ENCODE measurements at regions of chr2 and their contacts with region 1.

Region 1: DNA sequence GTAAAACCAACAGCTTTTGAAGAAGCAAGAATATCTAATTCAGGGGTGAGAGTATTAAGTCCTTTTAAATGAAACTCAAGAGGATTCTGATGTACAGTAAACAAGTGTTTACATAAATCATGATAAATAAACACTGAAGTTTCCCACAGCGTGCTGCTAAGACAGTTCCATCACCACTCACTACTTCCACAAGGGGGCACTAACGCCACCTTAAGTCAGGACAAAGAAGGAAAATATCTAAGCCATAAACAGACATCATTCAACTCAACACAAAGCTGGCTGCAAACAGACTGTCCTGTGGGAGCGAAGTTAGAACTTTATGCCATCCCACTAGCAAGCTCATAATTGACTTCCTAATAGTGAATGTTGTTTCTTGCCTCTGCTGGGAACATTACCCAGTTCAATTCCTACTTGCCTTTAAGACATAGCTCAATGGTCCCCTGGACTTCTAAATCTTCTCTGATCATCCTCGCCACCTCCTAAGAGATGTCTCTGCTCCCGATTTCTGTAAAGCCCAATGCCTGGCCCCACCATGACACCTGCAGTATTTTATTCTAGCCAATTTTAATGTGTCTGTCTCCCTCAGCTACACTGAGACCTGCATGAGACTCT is 36.5 kb downstream of the MRPL44 start:
- DNase-seq: peak; percentile 48 to 79 (median 58)
- H3K4me3 ChIP-seq: no peak overlapping the region
- H3K27ac ChIP-seq: no peak overlapping the region
- H3K4me1 ChIP-seq: no peaks in the 10 kb centered on the region
- H3K27me3 ChIP-seq: no peaks in the 10 kb centered on the region
- CTCF ChIP-seq: peak; percentile 48 to 83 (median 72)
- EP300 ChIP-seq: no peak
- POLR2A ChIP-seq: no peak

Region 2: GRCh38 chr2:224039124-224039940 is 45.6 kb after region 1 on chr2 and contains the start of gene SERPINE2:
- intact Hi-C with region 1: loop called in 1 of 4 experiments (anchors 5 kb)
- DNase-seq: peak; percentile 69 to 82 (median 73)
- H3K4me3 ChIP-seq: peak within 1 kb of the TSS; percentile 46
- H3K27ac ChIP-seq: peak within 1 kb of the TSS; percentile 71 to 86
- H3K4me1 ChIP-seq: peaks cover 24% of the 10 kb centered on the region
- H3K27me3 ChIP-seq: no peaks in the 10 kb centered on the region
- CTCF ChIP-seq: peak in 2 of 3 donors; percentile 16 to 18
- EP300 ChIP-seq: no peak
- POLR2A ChIP-seq: no peak
- total RNA-seq, gene SERPINE2: 42.5 to 215 (median 75.9) TPM

Region 3: DNA sequence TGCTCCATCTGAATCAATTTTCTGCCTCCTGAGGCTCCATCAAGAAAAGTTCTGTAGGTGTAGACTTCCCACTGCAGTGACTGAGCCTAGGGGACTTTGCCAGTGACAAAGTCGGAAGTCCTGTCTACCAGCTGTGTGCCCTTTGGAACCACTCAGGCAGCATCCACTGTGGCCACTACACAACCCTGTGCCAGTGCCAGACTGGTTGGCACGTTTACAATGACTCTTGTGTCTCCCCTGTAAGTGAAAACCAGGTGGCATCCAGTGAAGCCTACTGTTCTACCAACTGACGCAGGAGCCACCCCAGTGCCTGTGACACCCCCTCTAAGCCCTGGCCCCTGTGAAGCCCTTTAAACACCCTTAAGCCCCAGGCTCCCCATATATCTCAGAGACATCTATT is 177.5 kb after region 1 on chr2:
- intact Hi-C with region 1: no loop called
- DNase-seq: no peak
- H3K4me3 ChIP-seq: no peak overlapping the region
- H3K27ac ChIP-seq: no peak overlapping the region
- H3K4me1 ChIP-seq: no peaks in the 10 kb centered on the region
- H3K27me3 ChIP-seq: no peaks in the 10 kb centered on the region
- CTCF ChIP-seq: no peak
- EP300 ChIP-seq: no peak
- POLR2A ChIP-seq: no peak

Region 4: GRCh38 chr2:224195925-224196571 is 202.3 kb after region 1 on chr2:
- intact Hi-C with region 1: loop called in 1 of 4 experiments (anchors 10 kb)
- DNase-seq: peak; percentile 62 to 71 (median 64)
- H3K4me3 ChIP-seq: no peak overlapping the region
- H3K27ac ChIP-seq: peak overlapping the region in 1 of 2 donors; percentile 26
- H3K4me1 ChIP-seq: peaks cover 7% of the 10 kb centered on the region
- H3K27me3 ChIP-seq: no peaks in the 10 kb centered on the region
- CTCF ChIP-seq: no peak
- EP300 ChIP-seq: no peak
- POLR2A ChIP-seq: no peak

Region 5: GRCh38 chr2:224284134-224284946 is 290.6 kb after region 1 on chr2:
- intact Hi-C with region 1: loop called (anchors 5 to 10 kb)
- DNase-seq: no peak
- H3K4me3 ChIP-seq: no peak overlapping the region
- H3K27ac ChIP-seq: no peak overlapping the region
- H3K4me1 ChIP-seq: no peaks in the 10 kb centered on the region
- H3K27me3 ChIP-seq: no peaks in the 10 kb centered on the region
- CTCF ChIP-seq: peak; percentile 27 to 92 (median 89)
- EP300 ChIP-seq: no peak
- POLR2A ChIP-seq: no peak